ENCODE measurements at regions of chr19 and their contacts with region 1.

Region 1: DNA sequence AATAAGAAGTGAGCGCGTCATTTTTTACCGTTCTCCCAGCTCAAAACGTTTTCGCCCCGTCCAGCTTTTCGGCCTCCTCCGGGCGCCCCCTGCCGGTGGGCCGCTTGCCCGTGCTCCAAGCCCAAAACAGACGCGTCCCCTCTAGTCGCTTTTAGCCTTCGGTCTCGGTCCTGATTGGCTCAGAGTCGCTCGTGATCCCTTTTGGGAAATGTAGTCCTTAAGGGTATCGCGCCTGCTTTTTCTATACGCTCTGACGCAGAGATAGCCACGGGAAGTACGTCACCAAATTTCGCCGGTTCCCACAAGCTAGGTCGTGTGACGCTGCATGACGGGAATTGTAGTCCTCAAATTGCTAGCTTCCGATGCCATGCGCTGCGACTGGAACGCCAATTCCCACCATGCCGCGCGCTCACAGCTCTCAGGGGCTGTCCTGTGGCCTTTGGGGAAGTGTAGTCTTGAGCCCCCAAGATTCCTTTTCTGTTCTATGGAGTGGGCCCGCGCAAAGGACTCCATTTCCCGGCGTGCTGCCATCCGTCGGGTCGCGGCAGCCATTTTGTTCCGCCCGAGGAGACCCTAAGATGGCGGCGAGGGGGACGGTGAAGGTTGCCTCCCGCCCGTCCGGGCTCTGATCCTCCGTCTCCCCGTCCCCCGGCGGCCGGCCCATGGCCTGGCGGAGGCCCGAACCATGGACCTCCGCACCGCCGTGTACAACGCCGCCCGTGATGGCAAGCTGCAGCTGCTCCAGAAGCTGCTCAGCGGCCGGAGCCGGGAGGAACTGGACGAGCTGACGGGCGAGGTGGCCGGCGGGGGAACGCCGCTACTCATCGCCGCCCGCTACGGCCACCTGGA is at the start of gene FEM1A:
- H3K4me3 ChIP-seq: peak within 1 kb of the TSS; percentile 97
- H3K27ac ChIP-seq: peak within 1 kb of the TSS; percentile 88
- H3K4me1 ChIP-seq: no peaks in the 10 kb centered on the region; the same call in 1 of the 2 replicates
- CTCF ChIP-seq: peak; percentile 92

Region 2: GRCh38 chr19:4624733-4625362 is 166.5 kb before region 1 on chr19:
- CTCF ChIA-PET with region 1: no interaction called
- POLR2A ChIA-PET with region 1: no interaction called
- H3K4me3 ChIP-seq: no peak overlapping the region
- H3K27ac ChIP-seq: no peak overlapping the region
- H3K4me1 ChIP-seq: no peaks in the 10 kb centered on the region
- CTCF ChIP-seq: peak; percentile 70

Region 3: DNA sequence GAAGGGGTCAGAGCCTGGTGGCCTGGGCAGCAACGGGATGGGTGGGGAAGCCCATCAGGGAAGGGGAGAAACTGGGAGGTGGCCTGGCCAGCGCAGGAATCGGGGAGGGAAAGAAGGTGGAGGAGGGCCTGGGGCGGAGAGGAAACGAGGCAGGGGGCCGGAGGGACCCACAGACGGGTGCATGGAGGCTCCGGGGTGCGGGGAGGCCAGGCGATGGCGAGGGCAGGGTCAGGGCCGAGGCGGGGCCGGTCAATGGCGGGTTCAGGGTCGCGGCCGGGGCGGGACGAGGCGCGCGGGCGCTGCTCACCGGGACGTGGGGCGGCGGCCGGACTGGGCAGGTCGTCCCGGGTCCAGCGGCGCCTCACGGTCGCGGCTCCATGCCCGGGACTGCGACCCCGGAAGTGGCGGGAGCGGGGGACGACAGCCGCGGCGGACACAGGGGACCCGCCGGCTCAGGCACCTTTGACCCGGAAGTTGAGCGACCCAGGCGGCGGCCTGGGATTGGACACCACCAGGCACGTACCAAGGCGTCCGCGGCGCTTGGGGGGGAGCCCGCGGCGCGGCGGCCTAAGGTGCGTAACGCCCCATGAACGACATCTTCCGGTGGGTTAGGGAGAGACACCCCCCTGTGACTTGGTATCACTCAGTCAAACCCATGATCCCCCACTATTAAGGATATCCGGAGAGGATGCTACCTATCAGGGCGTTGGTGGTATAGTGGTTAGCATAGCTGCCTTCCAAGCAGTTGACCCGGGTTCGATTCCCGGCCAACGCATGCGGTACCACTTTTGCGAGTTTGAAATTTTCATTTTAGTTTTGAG is 67.8 kb before region 1 on chr19 and contains the start of gene DPP9:
- CTCF ChIA-PET with region 1: interaction called, 154 read pairs
- POLR2A ChIA-PET with region 1: interaction called, 13 read pairs
- H3K4me3 ChIP-seq: peak within 1 kb of the TSS; percentile 97
- H3K27ac ChIP-seq: peak within 1 kb of the TSS; percentile 66; the same call in 1 of the 2 replicates
- H3K4me1 ChIP-seq: peaks cover 3% of the 10 kb centered on the region; the same call in 1 of the 2 replicates
- CTCF ChIP-seq: peak; percentile 92

Region 4: DNA sequence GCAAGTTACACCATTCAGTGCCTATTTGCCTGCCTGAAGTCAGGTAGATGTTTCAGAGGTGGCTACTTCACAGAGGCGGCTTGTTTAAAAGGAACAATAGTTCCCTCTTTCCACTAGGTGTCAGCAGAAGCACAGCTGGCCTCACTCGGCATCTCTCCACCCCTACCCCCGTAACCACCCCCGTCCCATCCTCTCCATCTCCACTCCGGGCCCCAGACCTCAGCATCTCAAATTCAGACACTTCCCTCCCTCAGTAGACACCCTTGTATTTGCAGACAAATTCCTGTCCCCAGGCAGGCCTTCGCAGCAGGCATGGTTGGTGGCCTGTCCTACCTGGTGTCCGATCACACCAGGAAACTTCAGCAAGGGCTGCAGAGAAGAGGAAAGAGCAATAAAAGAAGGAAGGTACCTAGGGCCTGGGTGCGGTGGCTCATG is 58.7 kb before region 1 on chr19:
- CTCF ChIA-PET with region 1: interaction called, 154 read pairs
- POLR2A ChIA-PET with region 1: interaction called, 4 read pairs
- H3K4me3 ChIP-seq: no peak overlapping the region
- H3K27ac ChIP-seq: no peak overlapping the region
- H3K4me1 ChIP-seq: no peaks in the 10 kb centered on the region
- CTCF ChIP-seq: peak; percentile 82

Region 5: DNA sequence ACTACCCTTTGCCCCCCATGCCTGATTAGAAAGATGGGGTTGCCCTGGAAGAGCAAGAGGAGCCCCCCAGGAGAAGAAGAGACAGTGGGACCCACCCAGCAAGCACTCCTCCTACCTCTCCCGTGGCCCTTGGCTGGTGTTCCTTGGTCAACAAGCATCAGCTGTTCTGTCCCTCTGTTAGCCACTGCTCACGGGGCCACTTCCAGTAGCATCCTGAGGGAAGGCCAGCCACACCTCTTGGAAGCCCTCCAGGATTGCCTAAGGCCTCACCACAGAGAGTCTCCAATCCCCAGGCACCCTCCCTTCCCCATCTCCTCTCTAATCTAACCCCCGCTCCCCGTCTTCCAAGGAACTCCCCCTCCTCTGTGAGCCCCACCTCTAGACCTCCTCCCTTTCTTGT is 52.7 kb before region 1 on chr19:
- CTCF ChIA-PET with region 1: interaction called, 154 read pairs
- POLR2A ChIA-PET with region 1: interaction called, 4 read pairs
- H3K4me3 ChIP-seq: no peak overlapping the region
- H3K27ac ChIP-seq: no peak overlapping the region
- H3K4me1 ChIP-seq: no peaks in the 10 kb centered on the region
- CTCF ChIP-seq: no peak

Region 6: DNA sequence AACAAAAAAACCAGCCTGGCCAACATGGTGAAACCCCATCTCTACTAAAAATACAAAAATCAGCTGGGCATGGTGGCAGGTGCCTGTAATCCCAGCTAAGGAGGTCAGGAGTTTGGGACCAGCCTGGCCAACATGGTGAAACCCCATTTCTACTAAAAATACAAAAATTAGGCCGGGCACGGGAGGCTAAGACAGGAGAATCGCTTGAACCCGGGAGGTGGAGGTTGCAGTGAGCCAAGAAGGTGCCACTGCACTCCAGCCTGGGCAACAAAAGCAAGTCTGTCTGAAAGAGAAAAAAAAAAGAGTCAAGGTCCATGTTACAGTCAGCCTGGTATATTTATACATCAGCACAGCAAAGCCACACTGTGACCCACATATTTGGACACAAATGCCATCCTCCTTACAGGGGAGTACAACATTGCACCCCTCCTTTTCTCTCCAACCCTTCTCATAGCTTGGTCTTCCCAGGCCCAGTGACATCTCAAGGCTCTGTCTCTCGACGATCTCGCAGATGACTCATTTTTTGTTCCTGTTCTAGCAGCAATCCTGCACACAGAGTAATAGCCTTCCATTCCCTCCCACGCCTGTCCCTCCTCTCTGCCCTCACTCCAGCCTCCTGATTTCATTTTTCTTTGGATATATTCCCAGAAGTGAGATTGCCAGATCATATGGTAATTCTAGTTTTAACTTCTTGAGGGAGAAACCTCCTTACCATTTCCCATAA is 46.8 kb before region 1 on chr19:
- CTCF ChIA-PET with region 1: interaction called, 27 read pairs
- POLR2A ChIA-PET with region 1: interaction called, 3 read pairs
- H3K4me3 ChIP-seq: no peak overlapping the region
- H3K27ac ChIP-seq: no peak overlapping the region
- H3K4me1 ChIP-seq: no peaks in the 10 kb centered on the region
- CTCF ChIP-seq: no peak

Region 7: DNA sequence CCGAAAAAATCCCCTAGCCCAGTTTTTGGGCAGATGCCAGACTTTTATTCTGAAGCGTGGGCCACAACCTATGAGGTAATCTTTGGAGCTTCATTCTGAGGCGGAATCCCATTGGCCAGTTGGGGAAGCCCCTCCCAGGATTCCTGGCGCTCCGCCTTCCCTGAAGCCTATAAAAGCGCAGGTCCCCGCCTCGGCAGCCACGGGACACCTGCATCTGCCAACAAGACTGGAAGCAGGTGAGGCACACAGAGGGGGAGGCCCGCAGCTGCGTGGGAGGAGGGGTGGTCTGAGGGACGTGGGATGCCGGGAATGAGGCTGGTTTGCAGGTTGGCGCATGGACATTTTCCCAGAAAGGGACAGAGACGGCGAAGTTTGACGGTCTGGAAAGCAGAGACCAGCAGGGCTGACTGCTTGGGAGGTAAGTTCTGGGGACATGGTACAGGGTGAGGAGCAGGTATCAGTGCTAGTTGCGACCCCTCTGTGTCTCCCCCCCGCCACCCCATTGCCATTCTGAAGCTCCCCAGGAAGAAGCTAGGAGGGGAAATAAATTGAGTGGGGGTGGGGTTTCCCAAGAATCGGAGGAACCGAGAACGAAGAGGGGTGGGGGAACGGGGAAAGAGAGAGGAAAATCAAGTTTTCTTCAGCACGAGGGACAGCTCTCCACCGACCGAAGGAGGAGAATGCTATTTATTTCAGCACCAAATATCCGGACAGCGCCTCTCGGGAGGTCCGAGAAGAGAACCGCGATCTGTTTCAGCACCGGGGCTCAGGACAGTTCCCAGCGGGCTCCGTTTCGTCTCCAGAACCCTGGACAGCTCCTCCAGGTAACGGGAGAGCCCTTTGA is 22.2 kb before region 1 on chr19:
- CTCF ChIA-PET with region 1: interaction called, 13 read pairs
- POLR2A ChIA-PET with region 1: interaction called, 7 read pairs
- H3K4me3 ChIP-seq: no peak overlapping the region
- H3K27ac ChIP-seq: no peak overlapping the region
- H3K4me1 ChIP-seq: no peaks in the 10 kb centered on the region
- CTCF ChIP-seq: no peak

Region 8: DNA sequence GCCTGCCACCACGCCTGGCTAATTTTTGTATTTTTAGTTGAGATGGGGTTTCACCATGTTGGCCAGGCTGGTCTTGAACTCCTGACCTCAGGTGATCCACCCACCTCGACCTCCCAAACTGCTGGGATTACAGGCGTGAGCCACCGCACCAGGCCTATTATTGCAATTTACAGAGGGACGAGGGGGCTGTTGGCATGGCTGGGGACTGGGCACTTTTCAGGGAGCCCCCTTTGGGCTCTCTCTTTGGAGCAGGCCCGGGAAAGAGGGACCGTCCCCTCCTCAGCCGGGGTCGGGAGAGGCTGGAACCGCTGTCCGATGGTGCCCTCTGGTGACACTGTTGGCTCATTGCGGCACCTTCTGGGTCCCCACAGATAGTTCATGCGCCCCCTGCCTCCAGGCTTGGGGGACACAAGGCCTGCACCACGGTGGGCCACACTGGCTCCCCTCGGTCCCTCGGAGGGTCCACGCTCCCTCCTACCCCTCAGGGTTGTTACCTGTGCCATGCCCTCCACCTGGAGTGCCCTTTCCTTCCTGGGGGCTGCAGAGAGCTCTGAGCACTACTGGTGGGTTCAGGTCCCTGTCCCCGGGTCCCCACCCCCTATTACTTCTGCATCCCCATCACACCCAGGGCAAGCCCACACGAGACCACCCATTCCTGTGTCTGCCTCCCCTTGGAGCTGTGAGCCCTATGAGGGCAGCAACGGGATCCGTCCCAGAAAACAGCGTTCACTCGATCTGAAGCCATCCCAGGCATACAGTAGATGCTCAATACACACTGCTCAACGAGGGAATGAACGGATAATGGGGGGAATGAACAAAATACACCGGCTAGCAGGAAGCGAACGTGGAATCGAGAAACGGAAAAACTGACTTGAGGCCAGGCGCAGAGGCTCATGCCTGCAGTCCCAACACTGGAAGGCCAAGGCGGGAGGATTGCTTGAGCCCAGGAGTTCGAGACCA is 12.6 kb after region 1 on chr19:
- CTCF ChIA-PET with region 1: interaction called, 16 read pairs
- POLR2A ChIA-PET with region 1: interaction called, 8 read pairs
- H3K4me3 ChIP-seq: no peak overlapping the region
- H3K27ac ChIP-seq: no peak overlapping the region
- H3K4me1 ChIP-seq: no peaks in the 10 kb centered on the region
- CTCF ChIP-seq: peak; percentile 96

Region 9: DNA sequence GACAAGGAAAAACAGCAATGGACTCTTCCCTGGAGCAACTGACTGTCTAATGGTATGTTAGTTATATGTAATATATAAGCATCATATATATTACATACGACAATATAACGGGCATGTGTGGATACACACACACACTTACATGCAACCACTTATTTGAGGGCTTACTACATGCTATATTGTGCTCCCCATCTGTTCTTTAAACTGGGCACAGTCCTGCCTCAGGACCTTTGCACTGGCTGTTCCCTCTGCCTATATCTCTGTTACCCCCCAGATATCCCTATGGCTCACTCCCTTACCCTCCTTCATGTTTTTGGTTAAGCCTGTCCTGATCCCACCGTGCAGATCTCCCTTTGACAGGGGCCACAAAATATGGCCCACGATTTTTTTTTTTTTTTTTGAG is 29.9 kb after region 1 on chr19:
- CTCF ChIA-PET with region 1: no interaction called
- POLR2A ChIA-PET with region 1: no interaction called
- H3K4me3 ChIP-seq: no peak overlapping the region
- H3K27ac ChIP-seq: no peak overlapping the region
- H3K4me1 ChIP-seq: no peaks in the 10 kb centered on the region
- CTCF ChIP-seq: no peak

Region 10: GRCh38 chr19:4877753-4878490 is 86.5 kb after region 1 on chr19:
- CTCF ChIA-PET with region 1: no interaction called
- POLR2A ChIA-PET with region 1: no interaction called
- H3K4me3 ChIP-seq: no peak overlapping the region
- H3K27ac ChIP-seq: no peak overlapping the region
- H3K4me1 ChIP-seq: no peaks in the 10 kb centered on the region
- CTCF ChIP-seq: no peak

Region 11: GRCh38 chr19:4939466-4939865 is 148.1 kb after region 1 on chr19:
- CTCF ChIA-PET with region 1: no interaction called
- POLR2A ChIA-PET with region 1: no interaction called
- H3K4me3 ChIP-seq: no peak overlapping the region
- H3K27ac ChIP-seq: no peak overlapping the region
- H3K4me1 ChIP-seq: no peaks in the 10 kb centered on the region
- CTCF ChIP-seq: no peak